Tibial artery (tissue), 4 donors: ENCODE measurements at regions of chr18 and their contacts with region 1.

Region 1: GRCh38 chr18:2758309-2758708 is 88.5 kb upstream of the EMILIN2 start:
- DNase-seq: no peak
- H3K4me3 ChIP-seq: no peak overlapping the region
- H3K27ac ChIP-seq: no peak overlapping the region
- H3K4me1 ChIP-seq: no peaks in the 10 kb centered on the region
- H3K27me3 ChIP-seq: no peaks in the 10 kb centered on the region
- CTCF ChIP-seq: no peak

Region 2: DNA sequence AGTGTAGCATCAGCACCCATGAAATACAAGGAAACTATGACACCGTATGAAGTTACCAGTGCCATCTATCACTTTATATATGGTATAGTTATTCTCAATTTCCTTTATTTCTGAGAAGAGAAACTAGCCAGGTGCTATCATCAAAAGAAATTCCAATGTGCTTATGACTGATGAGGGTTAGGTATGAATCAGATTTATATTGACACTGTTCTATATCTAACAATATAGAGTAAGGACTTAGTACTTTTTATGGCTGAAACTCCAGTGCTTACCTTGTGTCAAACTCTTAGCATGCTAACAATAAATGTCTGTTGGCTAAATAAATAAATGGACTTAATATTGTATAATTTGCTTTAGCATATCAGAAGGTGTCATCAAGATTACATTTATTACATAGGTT is 193.9 kb before region 1 on chr18:
- intact Hi-C with region 1: no loop called
- DNase-seq: no peak
- H3K4me3 ChIP-seq: no peak overlapping the region
- H3K27ac ChIP-seq: no peak overlapping the region
- H3K4me1 ChIP-seq: peaks cover 0 to 7% (median 2%) of the 10 kb centered on the region in 4 donors
- H3K27me3 ChIP-seq: no peaks in the 10 kb centered on the region
- CTCF ChIP-seq: no peak

Region 3: GRCh38 chr18:2906704-2907549 is 148.6 kb after region 1 on chr18:
- intact Hi-C with region 1: loop called (anchors 10 kb)
- DNase-seq: no peak
- H3K4me3 ChIP-seq: peak overlapping the region; percentile 44 to 61
- H3K27ac ChIP-seq: peak overlapping the region; percentile 29 to 39
- H3K4me1 ChIP-seq: peaks cover 0 to 32% (median 14%) of the 10 kb centered on the region in 4 donors
- H3K27me3 ChIP-seq: peaks cover 0 to 10% of the 10 kb centered on the region in 2 donors
- CTCF ChIP-seq: no peak